ENCODE measurements at regions of chr2 and their contacts with region 1.

Region 1: GRCh38 chr2:181466661-181467576 is 9.7 kb downstream of the ITGA4 start:
- DNase-seq: peak in 1 of 2 experiments; percentile 58
- H3K4me3 ChIP-seq: no peak overlapping the region
- H3K27ac ChIP-seq: no peak overlapping the region
- H3K4me1 ChIP-seq: no peaks in the 10 kb centered on the region
- H3K27me3 ChIP-seq: no peaks in the 10 kb centered on the region
- CTCF ChIP-seq: peak; percentile 99

Region 2: DNA sequence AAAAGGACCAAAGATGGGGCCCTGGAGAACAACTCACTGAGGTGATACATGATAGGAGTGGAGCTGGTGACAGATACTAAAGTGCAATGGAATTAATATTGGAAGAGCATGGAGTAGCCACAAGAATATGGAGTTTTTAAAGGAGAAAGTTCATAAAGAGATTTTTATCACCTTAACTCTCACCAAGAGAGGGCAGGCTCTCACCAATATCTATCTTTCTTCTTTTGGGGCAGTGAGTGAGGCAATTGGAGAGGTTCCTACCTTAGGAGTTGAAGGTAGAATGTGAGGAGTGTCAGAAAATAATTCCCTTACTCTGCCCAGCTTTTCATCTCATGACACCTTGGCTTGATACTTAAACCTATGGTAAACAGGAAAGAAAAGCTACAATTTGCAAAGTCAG is 1226.1 kb before region 1 on chr2:
- CTCF ChIA-PET with region 1: no interaction called
- POLR2A ChIA-PET with region 1: no interaction called
- intact Hi-C with region 1: loop called (anchors 5 kb)
- DNase-seq: peak in 1 of 2 experiments; percentile 52
- H3K4me3 ChIP-seq: no peak overlapping the region
- H3K27ac ChIP-seq: no peak overlapping the region
- H3K4me1 ChIP-seq: no peaks in the 10 kb centered on the region
- H3K27me3 ChIP-seq: no peaks in the 10 kb centered on the region
- CTCF ChIP-seq: peak; percentile 59

Region 3: GRCh38 chr2:181077128-181077709 is 389.7 kb before region 1 on chr2:
- CTCF ChIA-PET with region 1: no interaction called
- POLR2A ChIA-PET with region 1: no interaction called
- intact Hi-C with region 1: loop called (anchors 1 kb)
- DNase-seq: peak in 1 of 2 experiments; percentile 63
- H3K4me3 ChIP-seq: no peak overlapping the region
- H3K27ac ChIP-seq: no peak overlapping the region
- H3K4me1 ChIP-seq: no peaks in the 10 kb centered on the region
- H3K27me3 ChIP-seq: no peaks in the 10 kb centered on the region
- CTCF ChIP-seq: peak; percentile 95

Region 4: GRCh38 chr2:181380581-181380980 is 86.3 kb before region 1 on chr2:
- CTCF ChIA-PET with region 1: no interaction called
- POLR2A ChIA-PET with region 1: no interaction called
- intact Hi-C with region 1: no loop called
- DNase-seq: no peak
- H3K4me3 ChIP-seq: no peak overlapping the region
- H3K27ac ChIP-seq: no peak overlapping the region
- H3K4me1 ChIP-seq: no peaks in the 10 kb centered on the region
- H3K27me3 ChIP-seq: no peaks in the 10 kb centered on the region
- CTCF ChIP-seq: no peak

Region 5: GRCh38 chr2:181742922-181743722 is 276.2 kb after region 1 on chr2:
- CTCF ChIA-PET with region 1: no interaction called
- POLR2A ChIA-PET with region 1: no interaction called
- intact Hi-C with region 1: no loop called
- DNase-seq: peak; percentile 50 to 59
- H3K4me3 ChIP-seq: no peak overlapping the region
- H3K27ac ChIP-seq: no peak overlapping the region
- H3K4me1 ChIP-seq: peaks cover 14% of the 10 kb centered on the region
- H3K27me3 ChIP-seq: no peaks in the 10 kb centered on the region
- CTCF ChIP-seq: peak; percentile 95

Region 6: DNA sequence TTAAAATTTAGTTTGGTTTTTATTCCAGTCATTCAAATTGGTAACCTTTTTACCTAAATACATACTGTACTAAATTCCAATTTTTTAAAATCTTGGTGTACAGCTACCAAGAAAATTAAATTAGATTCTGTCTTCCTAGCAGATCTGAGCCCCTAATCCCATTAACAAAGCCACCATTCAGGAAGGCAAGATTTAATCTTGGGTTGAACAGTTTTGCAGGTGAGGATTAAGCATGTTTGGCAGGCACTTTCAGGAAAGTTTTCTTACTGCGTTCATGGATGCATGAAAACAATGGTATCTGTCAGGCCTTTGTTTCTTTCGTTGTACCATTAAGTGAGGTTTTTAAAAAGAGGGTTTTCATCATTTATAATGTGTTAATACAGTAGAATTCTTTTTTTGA is 457.4 kb after region 1 on chr2:
- CTCF ChIA-PET with region 1: no interaction called
- POLR2A ChIA-PET with region 1: no interaction called
- intact Hi-C with region 1: no loop called
- DNase-seq: no peak
- H3K4me3 ChIP-seq: no peak overlapping the region
- H3K27ac ChIP-seq: no peak overlapping the region
- H3K4me1 ChIP-seq: no peaks in the 10 kb centered on the region
- H3K27me3 ChIP-seq: no peaks in the 10 kb centered on the region
- CTCF ChIP-seq: no peak